ENCODE measurements at regions of chr13 and their contacts with region 1.

Region 1: GRCh38 chr13:33610471-33611015 is 207.4 kb upstream of the RFC3 start:
- DNase-seq: no peak
- H3K4me3 ChIP-seq: peak overlapping the region; percentile 5 to 31 (median 18)
- H3K27ac ChIP-seq: peak overlapping the region; percentile 63 to 84 (median 74)
- H3K4me1 ChIP-seq: peaks cover 0 to 53% (median 38%) of the 10 kb centered on the region in 4 donors
- H3K27me3 ChIP-seq: no peaks in the 10 kb centered on the region
- CTCF ChIP-seq: no peak
- EP300 ChIP-seq: no peak
- POLR2A ChIP-seq: no peak

Region 2: GRCh38 chr13:33441015-33441414 is 169.5 kb before region 1 on chr13:
- intact Hi-C with region 1: no loop called
- DNase-seq: no peak
- H3K4me3 ChIP-seq: no peak overlapping the region
- H3K27ac ChIP-seq: no peak overlapping the region
- H3K4me1 ChIP-seq: peaks cover 0 to 33% (median 21%) of the 10 kb centered on the region in 4 donors
- H3K27me3 ChIP-seq: no peaks in the 10 kb centered on the region
- CTCF ChIP-seq: no peak
- EP300 ChIP-seq: no peak
- POLR2A ChIP-seq: no peak

Region 3: DNA sequence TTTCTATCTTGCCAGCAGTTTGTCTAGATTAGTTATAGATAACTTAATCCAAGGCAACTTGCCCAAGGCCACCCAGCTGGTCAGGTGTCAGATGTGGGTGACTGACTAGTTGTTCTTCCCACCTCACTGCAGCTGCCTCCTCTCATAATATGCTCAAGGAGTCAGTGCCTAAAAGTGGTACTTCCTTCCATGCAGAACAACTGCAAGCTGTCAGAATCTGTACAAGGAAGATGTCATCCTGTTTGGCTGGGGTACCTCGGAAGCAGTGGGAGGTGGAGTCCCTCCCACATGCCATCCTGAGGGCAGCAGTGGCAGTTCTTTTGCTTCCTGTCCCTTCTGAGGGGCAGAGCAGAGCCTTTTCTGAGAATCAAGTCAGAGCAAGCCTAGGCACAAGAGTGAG is 14.2 kb after region 1 on chr13:
- intact Hi-C with region 1: no loop called
- DNase-seq: no peak
- H3K4me3 ChIP-seq: no peak overlapping the region
- H3K27ac ChIP-seq: no peak overlapping the region
- H3K4me1 ChIP-seq: no peaks in the 10 kb centered on the region
- H3K27me3 ChIP-seq: no peaks in the 10 kb centered on the region
- CTCF ChIP-seq: no peak
- EP300 ChIP-seq: no peak
- POLR2A ChIP-seq: no peak

Region 4: GRCh38 chr13:33678906-33679657 is 68.5 kb after region 1 on chr13:
- intact Hi-C with region 1: loop called (anchors 5 kb)
- DNase-seq: peak; percentile 72
- H3K4me3 ChIP-seq: no peak overlapping the region
- H3K27ac ChIP-seq: peak overlapping the region in 2 of 4 donors; percentile 18 to 36
- H3K4me1 ChIP-seq: peaks cover 0 to 27% (median 16%) of the 10 kb centered on the region in 4 donors
- H3K27me3 ChIP-seq: no peaks in the 10 kb centered on the region
- CTCF ChIP-seq: no peak
- EP300 ChIP-seq: no peak
- POLR2A ChIP-seq: no peak